K562 (cell line): ENCODE measurements at regions of chr2 and their contacts with region 1.

Region 1: DNA sequence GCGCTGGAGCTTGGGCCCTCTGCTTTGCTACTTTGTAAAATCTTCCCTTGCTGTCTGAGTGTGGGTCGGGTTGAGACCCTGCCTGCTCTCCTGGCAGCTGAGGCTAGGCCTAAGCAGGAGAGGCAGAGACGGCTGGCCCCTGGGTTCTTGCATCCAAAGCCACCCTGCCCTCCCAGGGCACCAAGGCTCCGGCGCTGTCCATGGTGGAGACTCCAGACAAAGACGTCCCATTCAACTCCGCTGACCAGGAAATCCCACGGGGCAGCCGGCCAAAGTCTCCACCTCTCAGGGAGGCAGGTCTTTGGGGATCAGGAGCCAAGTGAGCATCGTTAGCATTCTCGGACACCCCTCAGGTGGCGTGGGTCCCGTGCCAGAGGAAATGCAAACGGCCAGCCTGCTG is 2.6 kb upstream of the PRLH start:
- DNase-seq: no peak
- ATAC-seq: no peak
- H3K4me3 ChIP-seq: no peak overlapping the region
- H3K27ac ChIP-seq: no peak overlapping the region
- H3K4me1 ChIP-seq: no peaks in the 10 kb centered on the region; a peak in 2 of 5 replicates
- H3K27me3 ChIP-seq: peaks cover 4 to 42% of the 10 kb centered on the region in 2 experiments; a peak in 4 of 5 replicates
- CTCF ChIP-seq: no peak
- EP300 ChIP-seq: no peak
- POLR2A ChIP-seq: no peak
- RAD21 ChIP-seq: no peak

Region 2: DNA sequence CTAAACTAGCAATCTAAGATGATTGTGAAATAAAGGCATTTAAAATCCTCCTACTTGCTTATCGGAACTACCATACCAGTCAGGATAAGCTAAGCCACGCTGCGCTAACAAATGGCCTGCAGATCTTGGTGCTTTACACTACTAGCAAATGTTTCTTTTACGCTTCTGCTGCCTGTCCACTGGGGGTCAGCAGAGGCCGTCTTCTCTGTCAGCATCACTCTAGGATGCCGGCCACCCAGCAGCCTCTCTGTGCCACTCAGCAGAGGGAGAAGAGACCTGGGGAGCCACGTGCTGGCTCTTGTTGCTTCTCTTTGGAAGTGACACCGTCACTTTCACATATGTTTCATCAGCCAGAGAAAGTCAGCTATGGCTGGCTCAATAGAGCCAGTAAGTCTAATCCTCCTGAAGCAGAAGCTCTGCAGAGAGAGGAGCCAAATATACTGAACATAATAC is 441.6 kb before region 1 on chr2:
- CTCF ChIA-PET with region 1: no interaction called
- POLR2A ChIA-PET with region 1: no interaction called
- in situ Hi-C with region 1: loop called (anchors 10 kb)
- intact Hi-C with region 1: no loop called
- DNase-seq: peak; percentile 38 to 42 (median 41)
- ATAC-seq: peak; percentile 90
- H3K4me3 ChIP-seq: no peak overlapping the region
- H3K27ac ChIP-seq: no peak overlapping the region
- H3K4me1 ChIP-seq: no peaks in the 10 kb centered on the region
- H3K27me3 ChIP-seq: no peaks in the 10 kb centered on the region; a peak in 1 of 5 replicates
- CTCF ChIP-seq: peak; percentile 42 to 56 (median 44); a peak in 5 of 6 replicates
- EP300 ChIP-seq: no peak
- POLR2A ChIP-seq: no peak
- RAD21 ChIP-seq: peak in 1 of 2 experiments; percentile 54; a peak in 2 of 4 replicates